Activated CD8-positive, alpha-beta T cell treated with anti-CD3 and anti-CD28 coated beads for 36 hours (primary cell): ENCODE measurements at regions of chr16 and their contacts with region 1.

Region 1: GRCh38 chr16:28846080-28846932 is at the start of gene TUFM:
- DNase-seq: peak; percentile 98
- ATAC-seq: peak; percentile 95
- H3K4me3 Mint-ChIP-seq: peak within 1 kb of the TSS; percentile 99
- H3K27ac Mint-ChIP-seq: peak within 1 kb of the TSS; percentile 98
- H3K4me1 Mint-ChIP-seq: peaks cover 20% of the 10 kb centered on the region
- H3K27me3 Mint-ChIP-seq: no peaks in the 10 kb centered on the region
- CTCF ChIP-seq: peak; percentile 59
- total RNA-seq, gene TUFM: 309 to 323 TPM

Region 2: GRCh38 chr16:28901862-28902459 is 55.7 kb after region 1 on chr16:
- CTCF ChIA-PET with region 1: no interaction called
- POLR2A ChIA-PET with region 1: no interaction called
- intact Hi-C with region 1: no loop called
- DNase-seq: peak; percentile 33
- ATAC-seq: no peak
- H3K4me3 Mint-ChIP-seq: no peak overlapping the region
- H3K27ac Mint-ChIP-seq: no peak overlapping the region
- H3K4me1 Mint-ChIP-seq: peaks cover 4% of the 10 kb centered on the region
- H3K27me3 Mint-ChIP-seq: no peaks in the 10 kb centered on the region
- CTCF ChIP-seq: no peak

Region 3: DNA sequence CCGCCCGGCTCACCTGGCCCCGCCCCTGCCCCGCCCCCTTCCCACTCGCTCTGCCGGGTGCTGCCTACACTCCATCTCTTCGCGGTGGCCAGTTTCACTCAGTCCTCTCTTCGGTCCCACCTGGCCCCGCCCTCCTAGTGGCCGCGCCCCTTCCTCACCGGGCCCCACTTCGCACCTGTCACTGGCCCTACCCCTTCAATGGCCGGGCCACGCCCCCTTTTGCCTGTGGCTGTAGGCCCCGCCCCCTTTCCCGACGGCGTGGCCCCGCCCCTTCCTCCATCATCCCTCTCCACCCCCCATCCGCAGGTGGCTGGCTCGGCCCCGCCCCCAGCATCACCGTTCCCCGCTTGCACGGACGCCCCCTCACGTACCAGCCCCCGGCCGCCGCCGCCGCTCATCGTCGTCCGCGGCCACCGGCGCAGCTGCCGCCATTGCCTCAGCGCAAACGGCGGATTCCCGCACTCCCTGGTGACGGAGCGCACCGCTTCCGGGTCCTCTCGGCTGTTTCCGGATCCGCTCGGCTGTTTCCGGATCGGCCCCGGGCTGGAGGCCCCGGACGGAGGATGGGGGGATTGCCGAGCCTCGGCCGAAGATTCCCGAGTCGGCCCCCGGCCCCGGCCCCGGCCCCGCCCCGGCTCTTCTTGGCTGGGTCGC is 78.6 kb after region 1 on chr16 and contains the start of gene RABEP2:
- CTCF ChIA-PET with region 1: no interaction called
- POLR2A ChIA-PET with region 1: interaction called, 5 read pairs
- intact Hi-C with region 1: loop called (anchors 5 kb)
- DNase-seq: peak; percentile 96
- ATAC-seq: peak; percentile 90
- H3K4me3 Mint-ChIP-seq: peak within 1 kb of the TSS; percentile 93
- H3K27ac Mint-ChIP-seq: peak within 1 kb of the TSS; percentile 97
- H3K4me1 Mint-ChIP-seq: peaks cover 15% of the 10 kb centered on the region
- H3K27me3 Mint-ChIP-seq: no peaks in the 10 kb centered on the region
- CTCF ChIP-seq: no peak
- total RNA-seq, gene RABEP2: 13.1 to 14.0 TPM